Heart right ventricle (tissue), 16 donors: ENCODE measurements at regions of chr9 and their contacts with region 1.

Region 1: GRCh38 chr9:68584189-68585033 is 43.7 kb upstream of the TMEM252 start:
- DNase-seq: peak; percentile 68 to 89
- ATAC-seq: peak; percentile 94 to 98 (median 97)
- H3K4me3 ChIP-seq: peak overlapping the region in 1 of 10 donors; percentile 10
- H3K27ac ChIP-seq: peak overlapping the region in 1 of 10 donors; percentile 39
- H3K4me1 ChIP-seq: no peaks in the 10 kb centered on the region
- H3K27me3 ChIP-seq: no peaks in the 10 kb centered on the region
- CTCF ChIP-seq: peak; percentile 95 to 100 (median 99)

Region 2: DNA sequence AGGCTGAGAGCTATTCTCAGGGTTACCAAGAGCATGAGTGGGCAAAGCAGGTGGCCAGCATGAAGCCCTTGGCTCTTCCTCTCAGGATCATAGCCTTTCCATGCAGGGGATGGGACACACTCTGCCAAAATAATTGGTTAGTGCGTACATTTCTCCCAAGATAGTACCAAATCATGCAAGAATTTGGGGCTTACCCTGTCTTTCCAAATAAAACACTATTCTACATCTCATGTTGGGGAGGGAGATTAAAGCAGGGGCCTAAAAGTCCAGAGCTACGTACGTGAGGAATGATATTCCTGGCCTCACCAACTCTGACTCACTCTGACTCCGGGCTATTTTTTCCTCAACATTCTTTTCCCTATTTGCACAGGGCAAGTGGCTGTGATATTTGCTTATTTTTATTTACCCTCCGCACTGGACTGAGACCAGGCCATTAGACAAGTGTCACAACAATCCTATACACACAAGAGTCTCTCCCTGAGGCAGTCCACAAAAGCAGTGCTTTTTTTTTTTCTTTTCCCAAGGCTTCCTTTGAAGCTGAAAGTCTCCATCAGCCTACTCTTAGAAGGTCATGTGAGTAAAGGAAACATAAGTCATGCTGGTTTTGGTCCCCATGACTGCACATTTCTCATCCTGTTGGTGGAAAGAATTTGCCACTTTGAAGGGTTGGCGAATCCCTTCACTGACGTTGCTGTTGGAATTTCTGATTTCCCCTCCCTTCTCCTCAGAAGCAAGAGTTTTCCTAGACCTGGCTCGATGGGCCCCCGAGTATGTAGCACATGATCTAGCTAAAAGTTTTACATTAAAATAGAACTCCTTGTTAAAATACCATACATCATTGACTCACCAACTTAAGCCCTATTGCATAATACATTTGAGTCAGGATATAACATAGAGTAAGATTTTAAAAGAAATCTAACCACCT is 83.7 kb before region 1 on chr9:
- intact Hi-C with region 1: no loop called
- DNase-seq: no peak
- ATAC-seq: peak; percentile 75 to 90 (median 82)
- H3K4me3 ChIP-seq: no peak overlapping the region
- H3K27ac ChIP-seq: peak overlapping the region; percentile 50 to 89 (median 78)
- H3K4me1 ChIP-seq: peaks cover 7 to 86% (median 59%) of the 10 kb centered on the region in 9 donors
- H3K27me3 ChIP-seq: no peaks in the 10 kb centered on the region
- CTCF ChIP-seq: no peak

Region 3: GRCh38 chr9:68685770-68686169 is 101.4 kb after region 1 on chr9:
- intact Hi-C with region 1: loop called in 1 of 10 experiments (anchors 5 kb)
- DNase-seq: no peak
- ATAC-seq: no peak
- H3K4me3 ChIP-seq: no peak overlapping the region
- H3K27ac ChIP-seq: no peak overlapping the region
- H3K4me1 ChIP-seq: peaks cover 0 to 19% (median 10%) of the 10 kb centered on the region in 9 donors
- H3K27me3 ChIP-seq: peaks cover 0 to 12% (median 0%) of the 10 kb centered on the region in 7 donors
- CTCF ChIP-seq: peak in 6 of 9 donors; percentile 12 to 36 (median 26)

Region 4: GRCh38 chr9:68704814-68705530 is 120.6 kb after region 1 on chr9 and contains the start of gene PIP5K1B:
- intact Hi-C with region 1: loop called in 6 of 10 experiments (anchors 2 to 10 kb)
- DNase-seq: peak; percentile 66 to 76
- ATAC-seq: peak; percentile 82 to 92 (median 86)
- H3K4me3 ChIP-seq: peak within 1 kb of the TSS; percentile 29 to 79 (median 64)
- H3K27ac ChIP-seq: peak within 1 kb of the TSS; percentile 81 to 93 (median 88)
- H3K4me1 ChIP-seq: peaks cover 0 to 32% (median 8%) of the 10 kb centered on the region in 9 donors
- H3K27me3 ChIP-seq: peaks cover 0 to 50% (median 14%) of the 10 kb centered on the region in 7 donors
- CTCF ChIP-seq: peak in 3 of 9 donors; percentile 7 to 36 (median 13)
- total RNA-seq, gene PIP5K1B: 32.2 to 90.8 (median 49.7) TPM

Region 5: GRCh38 chr9:68832853-68833518 is 248.6 kb after region 1 on chr9:
- intact Hi-C with region 1: loop called in 1 of 10 experiments (anchors 10 kb)
- DNase-seq: no peak
- ATAC-seq: peak in 2 of 8 donors; percentile 19 to 51
- H3K4me3 ChIP-seq: no peak overlapping the region
- H3K27ac ChIP-seq: peak overlapping the region in 3 of 10 donors; percentile 11 to 46 (median 14)
- H3K4me1 ChIP-seq: peaks cover 0 to 51% (median 20%) of the 10 kb centered on the region in 9 donors
- H3K27me3 ChIP-seq: no peaks in the 10 kb centered on the region
- CTCF ChIP-seq: no peak

Region 6: DNA sequence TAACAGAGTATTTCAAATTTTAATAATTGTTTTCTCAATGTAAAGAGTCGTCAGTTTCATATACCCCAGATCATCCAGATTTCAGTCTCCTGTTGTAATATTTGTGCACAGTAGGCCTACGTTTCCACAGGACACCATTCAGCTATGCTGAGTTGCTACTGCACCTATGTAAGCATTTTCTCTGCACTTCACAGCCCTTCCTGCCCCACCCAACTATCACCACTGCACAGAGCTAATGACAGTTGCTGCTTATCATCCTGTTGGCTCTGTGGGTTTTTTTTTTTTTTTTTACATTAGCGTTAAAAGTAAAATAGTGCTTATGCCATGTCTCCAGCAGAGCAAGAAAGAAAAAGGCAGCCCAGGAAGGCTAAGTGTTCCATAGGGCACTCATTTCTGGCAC is 435.4 kb after region 1 on chr9:
- intact Hi-C with region 1: loop called in 4 of 10 experiments (anchors 5 kb)
- DNase-seq: no peak
- ATAC-seq: no peak
- H3K4me3 ChIP-seq: no peak overlapping the region
- H3K27ac ChIP-seq: no peak overlapping the region
- H3K4me1 ChIP-seq: peaks cover 0 to 9% (median 0%) of the 10 kb centered on the region in 9 donors
- H3K27me3 ChIP-seq: peaks cover 0 to 3% (median 0%) of the 10 kb centered on the region in 7 donors
- CTCF ChIP-seq: no peak